Left cardiac atrium (tissue), 4 donors: ENCODE measurements at regions of chr19 and their contacts with region 1.

Region 1: DNA sequence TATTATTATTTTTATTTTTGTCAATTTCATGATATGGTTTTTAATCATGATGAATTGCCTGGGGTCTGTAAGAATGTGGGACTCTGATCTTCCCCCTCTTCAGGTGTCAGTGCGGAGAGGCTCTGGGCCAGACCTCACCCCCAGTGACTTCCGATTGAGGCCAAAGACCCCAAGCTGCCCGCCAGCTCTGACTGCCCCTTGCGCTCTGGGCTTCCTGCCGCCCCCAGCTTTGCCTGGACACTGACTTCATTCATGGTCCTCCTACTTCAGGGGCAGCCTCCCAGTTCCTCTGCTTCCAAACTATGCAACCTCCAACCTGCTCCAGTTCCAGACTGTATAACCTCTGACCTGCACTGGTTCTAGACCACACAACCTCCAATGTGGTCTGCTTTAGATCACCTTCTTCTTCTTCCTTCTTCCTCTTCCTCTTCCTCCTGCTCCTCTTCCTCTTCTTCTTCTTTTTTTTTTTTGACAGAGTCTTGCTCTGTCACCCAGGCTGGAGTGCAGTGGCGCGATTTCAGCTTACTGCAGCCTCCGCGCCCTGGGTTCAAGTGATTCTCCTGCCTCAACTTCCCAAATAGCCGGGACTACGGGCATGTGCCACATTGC is 6.7 kb upstream of the PPP5C start:
- DNase-seq: no peak
- ATAC-seq: no peak

Region 2: GRCh38 chr19:46308510-46308909 is 31.6 kb before region 1 on chr19:
- intact Hi-C with region 1: loop called in 1 of 2 experiments (anchors 5 kb)
- DNase-seq: no peak
- ATAC-seq: no peak

Region 3: GRCh38 chr19:46423188-46423587 is 83.0 kb after region 1 on chr19:
- intact Hi-C with region 1: no loop called
- DNase-seq: no peak
- ATAC-seq: no peak